Right cardiac atrium (tissue), 5 donors: ENCODE measurements at regions of chr7 and their contacts with region 1.

Region 1: GRCh38 chr7:101688183-101688831 is 59.2 kb upstream of the MYL10 start:
- DNase-seq: peak; percentile 83 to 94 (median 93)
- ATAC-seq: peak; percentile 88 to 92
- H3K4me3 ChIP-seq: no peak overlapping the region
- H3K27ac ChIP-seq: no peak overlapping the region
- H3K4me1 ChIP-seq: no peaks in the 10 kb centered on the region
- H3K27me3 ChIP-seq: no peaks in the 10 kb centered on the region

Region 2: GRCh38 chr7:101378751-101379184 is 309.5 kb before region 1 on chr7:
- intact Hi-C with region 1: no loop called
- DNase-seq: peak in 1 of 3 donors; percentile 33
- ATAC-seq: no peak
- H3K4me3 ChIP-seq: no peak overlapping the region
- H3K27ac ChIP-seq: no peak overlapping the region
- H3K4me1 ChIP-seq: no peaks in the 10 kb centered on the region
- H3K27me3 ChIP-seq: no peaks in the 10 kb centered on the region

Region 3: GRCh38 chr7:101602484-101603241 is 85.6 kb before region 1 on chr7:
- intact Hi-C with region 1: loop called in 1 of 4 experiments (anchors 10 kb)
- DNase-seq: peak; percentile 80 to 90 (median 89)
- ATAC-seq: peak; percentile 87 to 90
- H3K4me3 ChIP-seq: no peak overlapping the region
- H3K27ac ChIP-seq: no peak overlapping the region
- H3K4me1 ChIP-seq: no peaks in the 10 kb centered on the region
- H3K27me3 ChIP-seq: no peaks in the 10 kb centered on the region

Region 4: GRCh38 chr7:101795461-101795860 is 107.2 kb after region 1 on chr7:
- intact Hi-C with region 1: loop called in 1 of 4 experiments (anchors 5 kb)
- DNase-seq: no peak
- ATAC-seq: no peak
- H3K4me3 ChIP-seq: no peak overlapping the region
- H3K27ac ChIP-seq: no peak overlapping the region
- H3K4me1 ChIP-seq: no peaks in the 10 kb centered on the region
- H3K27me3 ChIP-seq: no peaks in the 10 kb centered on the region

Region 5: GRCh38 chr7:102236592-102237287 is 548.4 kb after region 1 on chr7:
- intact Hi-C with region 1: loop called in 3 of 4 experiments (anchors 5 to 10 kb)
- DNase-seq: peak; percentile 56 to 81 (median 80)
- ATAC-seq: peak; percentile 71 to 84
- H3K4me3 ChIP-seq: no peak overlapping the region
- H3K27ac ChIP-seq: no peak overlapping the region
- H3K4me1 ChIP-seq: no peaks in the 10 kb centered on the region
- H3K27me3 ChIP-seq: no peaks in the 10 kb centered on the region

Region 6: DNA sequence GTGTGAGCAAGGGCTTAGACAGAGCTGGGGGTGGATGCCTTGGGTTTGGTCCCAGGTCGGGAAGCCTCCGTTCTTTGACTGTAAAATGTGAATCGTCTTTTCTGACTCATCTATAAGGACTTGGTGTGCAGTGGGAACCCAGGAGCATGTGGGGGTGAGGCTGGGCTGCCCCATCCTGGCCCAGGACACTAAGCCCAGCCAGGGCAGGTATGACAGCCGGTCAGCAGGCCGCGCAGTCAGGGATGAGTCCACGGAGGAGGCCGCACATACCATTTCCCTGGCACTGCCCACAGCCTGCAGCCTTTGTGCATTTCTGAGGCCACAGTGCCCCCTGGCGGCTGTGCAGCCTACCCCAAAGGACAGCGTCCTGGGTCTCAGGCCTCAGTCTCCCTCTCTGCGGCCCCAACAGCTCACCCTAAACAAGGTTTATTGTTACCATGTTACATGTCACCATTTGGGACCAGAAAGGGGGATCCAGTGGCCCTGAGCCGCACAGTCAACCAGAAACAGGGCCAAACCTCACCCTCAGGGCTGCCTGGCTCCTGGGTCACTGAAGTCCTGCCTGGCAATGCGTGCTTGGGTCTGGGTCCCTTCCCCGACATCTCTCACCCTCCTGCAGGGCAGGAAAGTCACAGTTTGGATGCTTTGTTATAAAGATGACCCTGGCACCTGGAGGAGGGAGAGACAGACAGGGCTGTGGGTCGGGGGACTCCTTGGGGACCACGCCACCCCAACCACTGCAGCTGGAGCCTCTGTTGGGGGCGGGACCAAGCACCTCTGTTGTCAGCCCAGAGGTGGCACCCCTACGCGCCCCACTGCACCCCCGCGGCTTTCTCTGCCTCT is 584.0 kb after region 1 on chr7:
- intact Hi-C with region 1: loop called in 1 of 4 experiments (anchors 5 kb)
- DNase-seq: peak; percentile 83 to 94 (median 92)
- ATAC-seq: peak; percentile 87 to 88
- H3K4me3 ChIP-seq: no peak overlapping the region
- H3K27ac ChIP-seq: no peak overlapping the region
- H3K4me1 ChIP-seq: no peaks in the 10 kb centered on the region
- H3K27me3 ChIP-seq: no peaks in the 10 kb centered on the region

Region 7: DNA sequence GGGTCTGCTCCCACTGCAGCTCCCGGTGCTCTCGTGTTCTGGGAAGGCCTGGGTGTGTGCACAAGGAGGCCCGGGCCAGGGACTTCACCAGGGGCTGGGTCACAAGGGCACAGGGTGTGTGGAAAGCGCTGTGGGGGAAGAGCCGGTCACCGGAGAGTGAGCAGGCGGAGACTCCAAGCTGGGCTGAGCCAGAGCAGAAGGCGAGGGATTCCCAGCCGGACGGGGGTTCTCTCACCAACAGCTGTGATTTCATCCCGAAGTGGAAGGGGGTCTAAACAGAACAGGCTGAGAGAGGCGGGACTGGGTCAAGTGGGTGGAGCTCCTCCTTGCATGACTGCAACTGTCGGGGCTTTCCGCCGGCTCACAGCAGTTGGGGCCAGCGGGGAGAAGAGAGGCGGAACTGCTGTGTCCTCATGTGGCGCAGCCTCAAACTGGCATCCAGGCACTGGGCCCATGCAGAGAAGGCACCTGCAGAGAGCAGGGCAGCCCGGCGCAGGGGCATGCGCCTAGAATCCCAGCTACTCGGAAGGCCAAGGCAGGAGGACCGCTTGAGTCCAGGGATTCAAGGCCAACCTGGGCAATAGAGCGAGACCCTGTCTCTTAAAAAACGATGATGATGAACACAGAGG is 737.4 kb after region 1 on chr7:
- intact Hi-C with region 1: no loop called
- DNase-seq: peak; percentile 44 to 82 (median 79)
- ATAC-seq: peak; percentile 53 to 59
- H3K4me3 ChIP-seq: no peak overlapping the region
- H3K27ac ChIP-seq: no peak overlapping the region
- H3K4me1 ChIP-seq: no peaks in the 10 kb centered on the region
- H3K27me3 ChIP-seq: no peaks in the 10 kb centered on the region